IMR-90 (cell line): ENCODE measurements at regions of chr13 and their contacts with region 1.

Region 1: DNA sequence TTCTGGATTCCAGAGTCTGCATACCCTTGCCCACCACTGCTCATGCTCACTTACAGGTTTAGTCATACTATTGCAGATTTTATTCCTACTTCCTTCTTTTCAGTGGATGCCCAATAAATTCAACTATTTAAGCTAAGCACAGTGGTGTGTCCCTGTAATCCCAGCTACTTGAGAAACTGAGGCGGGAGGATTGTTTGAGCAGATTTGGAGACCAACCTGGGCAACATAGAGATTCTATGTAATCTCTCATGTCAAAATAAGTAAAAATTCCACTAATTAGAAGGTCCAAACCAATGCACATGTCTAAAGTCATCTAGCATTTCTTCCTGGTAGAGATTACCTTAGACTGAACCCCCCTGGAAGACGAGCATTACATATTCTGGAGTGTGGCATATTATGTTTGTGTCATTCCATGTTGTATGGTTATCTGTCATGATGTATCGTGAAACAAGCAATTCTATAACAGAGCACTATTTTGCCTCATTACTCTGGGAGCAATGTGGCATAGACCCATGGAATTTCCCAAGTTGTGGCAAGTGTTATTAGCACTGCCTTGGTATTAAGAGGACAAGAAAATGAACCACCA is 8.3 kb downstream of the HMGB1 start:
- DNase-seq: no peak
- ATAC-seq: no peak
- H3K4me3 ChIP-seq: no peak overlapping the region
- H3K27ac ChIP-seq: no peak overlapping the region
- H3K4me1 ChIP-seq: no peaks in the 10 kb centered on the region
- H3K27me3 ChIP-seq: no peaks in the 10 kb centered on the region
- CTCF ChIP-seq: no peak
- POLR2A ChIP-seq: no peak
- RAD21 ChIP-seq: no peak

Region 2: GRCh38 chr13:30422054-30422839 is 35.2 kb before region 1 on chr13 and contains the start of gene UBE2L5:
- CTCF ChIA-PET with region 1: no interaction called
- POLR2A ChIA-PET with region 1: no interaction called
- dilution Hi-C with region 1: no loop called
- in situ Hi-C with region 1: no loop called
- intact Hi-C with region 1: loop called (anchors 5 kb)
- DNase-seq: peak; percentile 74
- ATAC-seq: peak; percentile 90
- H3K4me3 ChIP-seq: peak within 1 kb of the TSS; percentile 99
- H3K27ac ChIP-seq: peak within 1 kb of the TSS; percentile 94
- H3K4me1 ChIP-seq: peaks cover 4% of the 10 kb centered on the region; the same call in 1 of the 2 replicates
- H3K27me3 ChIP-seq: no peaks in the 10 kb centered on the region
- CTCF ChIP-seq: no peak
- POLR2A ChIP-seq: no peak
- RAD21 ChIP-seq: no peak
- total RNA-seq, gene UBE2L5: 0.18 TPM in 1 of 2 replicates, not detected in the other